ENCODE measurements at regions of chr10 and their contacts with region 1.

Region 1: GRCh38 chr10:5446390-5446926 is 34.1 kb downstream of the NET1 start:
- DNase-seq: peak; percentile 60 to 89 (median 76)
- ATAC-seq: peak; percentile 78
- H3K4me3 ChIP-seq: peak overlapping the region; percentile 56
- H3K4me3 Mint-ChIP-seq: peak overlapping the region; percentile 98
- H3K27ac ChIP-seq: peak overlapping the region in 1 of 2 donors; percentile 43
- H3K27ac Mint-ChIP-seq: peak overlapping the region; percentile 90
- H3K4me1 ChIP-seq: peaks cover 6% of the 10 kb centered on the region
- H3K4me1 Mint-ChIP-seq: peaks cover 52% of the 10 kb centered on the region
- H3K27me3 ChIP-seq: no peaks in the 10 kb centered on the region
- H3K27me3 Mint-ChIP-seq: no peaks in the 10 kb centered on the region
- CTCF ChIP-seq: no peak

Region 2: DNA sequence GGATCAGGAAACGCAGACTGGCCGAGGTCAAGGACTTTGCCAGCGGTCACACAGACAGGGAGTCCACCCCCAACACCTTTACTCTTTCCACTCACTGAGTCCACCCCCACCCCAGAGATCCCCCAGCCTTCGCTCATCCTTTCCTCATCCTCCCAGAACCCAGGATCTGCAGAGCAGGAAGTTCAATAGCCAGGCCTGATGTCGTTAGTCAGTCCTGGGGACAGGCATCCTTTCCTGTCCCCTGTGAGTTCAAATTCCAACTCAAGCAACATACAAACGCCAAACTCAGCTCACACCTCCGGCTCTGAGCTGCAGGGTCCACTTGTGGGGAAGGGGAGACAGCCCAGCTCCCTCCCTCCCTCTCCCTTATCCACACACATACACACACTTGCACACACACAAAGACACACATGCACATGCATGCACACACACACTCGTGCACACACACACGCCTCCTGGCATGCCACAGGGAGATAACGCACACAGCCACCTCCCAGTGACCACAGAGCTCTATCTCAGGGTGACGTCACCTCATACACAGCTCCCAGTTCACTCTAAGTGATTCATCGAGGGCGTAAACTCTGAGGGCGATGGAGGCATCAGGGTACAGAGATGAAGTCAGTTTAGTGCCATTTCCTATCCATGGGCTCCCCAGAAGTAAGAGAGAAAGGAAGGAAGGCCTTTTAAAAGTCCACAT is 102.2 kb after region 1 on chr10:
- CTCF ChIA-PET with region 1: no interaction called
- POLR2A ChIA-PET with region 1: interaction called, 17 read pairs
- intact Hi-C with region 1: loop called (anchors 2 to 5 kb)
- DNase-seq: peak in 12 of 14 experiments; percentile 24 to 83 (median 56)
- ATAC-seq: peak; percentile 96
- H3K4me3 ChIP-seq: no peak overlapping the region
- H3K4me3 Mint-ChIP-seq: no peak overlapping the region
- H3K27ac ChIP-seq: no peak overlapping the region
- H3K27ac Mint-ChIP-seq: no peak overlapping the region
- H3K4me1 ChIP-seq: peaks cover 54% of the 10 kb centered on the region
- H3K4me1 Mint-ChIP-seq: no peaks in the 10 kb centered on the region
- H3K27me3 ChIP-seq: no peaks in the 10 kb centered on the region
- H3K27me3 Mint-ChIP-seq: no peaks in the 10 kb centered on the region
- CTCF ChIP-seq: no peak

Region 3: DNA sequence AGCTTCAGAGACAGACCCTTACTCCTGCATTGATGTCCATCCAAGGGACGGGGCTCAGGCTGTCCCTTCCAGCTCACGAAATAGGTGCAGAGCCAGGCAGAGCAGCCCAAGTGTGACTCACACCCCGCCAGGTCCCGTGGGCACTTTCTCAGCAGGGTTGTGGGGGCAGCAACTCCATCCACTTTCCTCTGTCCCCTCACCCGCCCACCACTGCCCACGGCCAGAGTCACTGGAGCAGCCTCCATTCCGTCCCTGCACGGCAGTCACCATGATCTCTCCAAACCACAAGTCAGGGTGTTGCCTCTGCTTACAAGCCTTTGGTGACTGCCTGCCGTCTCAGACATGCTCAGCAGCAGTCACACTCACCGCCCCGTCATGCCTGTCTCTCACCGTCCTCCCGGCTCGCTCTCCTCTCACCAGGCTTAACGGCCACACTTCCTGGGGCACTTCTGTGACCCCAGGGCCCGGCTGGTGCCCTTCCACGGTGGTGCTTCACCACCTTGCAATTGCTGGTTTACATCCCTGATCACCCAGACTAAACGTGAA is 117.6 kb after region 1 on chr10:
- CTCF ChIA-PET with region 1: no interaction called
- POLR2A ChIA-PET with region 1: interaction called, 32 read pairs
- intact Hi-C with region 1: no loop called
- DNase-seq: peak; percentile 38 to 79 (median 67)
- ATAC-seq: peak; percentile 87
- H3K4me3 ChIP-seq: peak overlapping the region; percentile 39
- H3K4me3 Mint-ChIP-seq: peak overlapping the region; percentile 82
- H3K27ac ChIP-seq: peak overlapping the region; percentile 69 to 79
- H3K27ac Mint-ChIP-seq: peak overlapping the region; percentile 99
- H3K4me1 ChIP-seq: peaks cover 43% of the 10 kb centered on the region
- H3K4me1 Mint-ChIP-seq: peaks cover 50% of the 10 kb centered on the region
- H3K27me3 ChIP-seq: no peaks in the 10 kb centered on the region
- H3K27me3 Mint-ChIP-seq: no peaks in the 10 kb centered on the region
- CTCF ChIP-seq: no peak

Region 4: GRCh38 chr10:5609952-5610616 is 163.6 kb after region 1 on chr10:
- CTCF ChIA-PET with region 1: no interaction called
- POLR2A ChIA-PET with region 1: interaction called, 7 read pairs
- intact Hi-C with region 1: loop called (anchors 5 kb)
- DNase-seq: no peak
- ATAC-seq: no peak
- H3K4me3 ChIP-seq: no peak overlapping the region
- H3K4me3 Mint-ChIP-seq: no peak overlapping the region
- H3K27ac ChIP-seq: no peak overlapping the region
- H3K27ac Mint-ChIP-seq: no peak overlapping the region
- H3K4me1 ChIP-seq: no peaks in the 10 kb centered on the region
- H3K4me1 Mint-ChIP-seq: no peaks in the 10 kb centered on the region
- H3K27me3 ChIP-seq: no peaks in the 10 kb centered on the region
- H3K27me3 Mint-ChIP-seq: peaks cover 5% of the 10 kb centered on the region
- CTCF ChIP-seq: no peak

Region 5: GRCh38 chr10:5623081-5623748 is 176.8 kb after region 1 on chr10:
- CTCF ChIA-PET with region 1: interaction called, 116 read pairs
- POLR2A ChIA-PET with region 1: interaction called, 27 read pairs
- intact Hi-C with region 1: loop called (anchors 1 kb)
- DNase-seq: peak; percentile 66 to 89 (median 78)
- ATAC-seq: peak; percentile 100
- H3K4me3 ChIP-seq: no peak overlapping the region
- H3K4me3 Mint-ChIP-seq: no peak overlapping the region
- H3K27ac ChIP-seq: no peak overlapping the region
- H3K27ac Mint-ChIP-seq: no peak overlapping the region
- H3K4me1 ChIP-seq: peaks cover 6% of the 10 kb centered on the region
- H3K4me1 Mint-ChIP-seq: no peaks in the 10 kb centered on the region
- H3K27me3 ChIP-seq: no peaks in the 10 kb centered on the region
- H3K27me3 Mint-ChIP-seq: no peaks in the 10 kb centered on the region
- CTCF ChIP-seq: peak; percentile 89

Measured in CD4-positive, alpha-beta T cell (primary cell).